ENCODE measurements at regions of chr1 and their contacts with region 1.

Region 1: DNA sequence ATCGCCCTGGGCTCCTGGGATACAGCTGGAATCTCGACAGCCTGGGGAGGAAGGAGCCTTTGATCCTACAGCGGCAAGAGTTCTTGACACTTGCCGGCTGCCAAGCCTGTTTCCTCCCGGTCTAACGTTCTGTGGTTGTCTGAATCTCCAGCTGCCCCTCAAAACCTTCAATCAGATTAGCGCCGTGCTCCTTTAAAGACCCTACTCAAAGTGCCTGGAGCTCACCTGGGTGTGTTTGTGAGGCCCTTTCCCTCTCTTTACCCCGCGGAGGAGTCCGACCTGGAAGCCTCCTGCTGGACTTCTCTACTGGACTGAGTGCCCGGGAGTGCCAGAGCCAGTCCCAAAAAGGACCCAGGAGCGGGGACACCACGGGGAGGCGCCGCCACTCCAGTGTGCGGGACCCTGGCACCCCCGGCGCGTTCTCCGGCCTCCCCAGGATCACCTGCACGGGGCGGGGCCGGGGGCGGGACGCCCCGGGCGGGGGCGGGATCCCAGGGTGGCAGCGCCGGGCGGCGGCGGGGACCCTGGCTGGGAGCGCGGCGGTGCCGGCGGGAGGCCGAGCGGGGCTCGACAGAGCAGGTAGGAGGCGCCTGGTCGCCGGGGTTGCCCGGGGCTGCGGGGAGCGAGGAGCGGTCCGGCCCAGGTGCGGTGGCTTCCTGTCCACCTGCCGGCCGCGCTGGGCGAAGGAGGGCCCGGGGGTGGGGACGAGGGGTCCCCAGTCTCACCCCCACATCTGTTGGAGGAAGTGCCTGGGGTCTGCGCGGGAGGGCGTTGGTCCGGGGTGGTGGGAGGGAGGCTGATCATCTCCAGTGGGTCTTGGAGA is at the start of gene NCMAP:
- DNase-seq: peak; percentile 48
- ATAC-seq: peak; percentile 66
- H3K4me3 ChIP-seq: peak within 1 kb of the TSS in 4 of 5 experiments; percentile 25 to 68 (median 49)
- H3K4me3 Mint-ChIP-seq: peak within 1 kb of the TSS; percentile 89
- H3K27ac ChIP-seq: no peak within 1 kb of the TSS
- H3K27ac Mint-ChIP-seq: peak within 1 kb of the TSS; percentile 65
- H3K4me1 ChIP-seq: peaks cover 11 to 18% of the 10 kb centered on the region in 2 donors
- H3K4me1 Mint-ChIP-seq: peaks cover 19% of the 10 kb centered on the region
- H3K27me3 ChIP-seq: peaks cover 0 to 34% (median 9%) of the 10 kb centered on the region in 4 experiments
- H3K27me3 Mint-ChIP-seq: peaks cover 21% of the 10 kb centered on the region
- CTCF ChIP-seq: no peak
- total RNA-seq, gene NCMAP: not detected in 2 replicates

Region 2: DNA sequence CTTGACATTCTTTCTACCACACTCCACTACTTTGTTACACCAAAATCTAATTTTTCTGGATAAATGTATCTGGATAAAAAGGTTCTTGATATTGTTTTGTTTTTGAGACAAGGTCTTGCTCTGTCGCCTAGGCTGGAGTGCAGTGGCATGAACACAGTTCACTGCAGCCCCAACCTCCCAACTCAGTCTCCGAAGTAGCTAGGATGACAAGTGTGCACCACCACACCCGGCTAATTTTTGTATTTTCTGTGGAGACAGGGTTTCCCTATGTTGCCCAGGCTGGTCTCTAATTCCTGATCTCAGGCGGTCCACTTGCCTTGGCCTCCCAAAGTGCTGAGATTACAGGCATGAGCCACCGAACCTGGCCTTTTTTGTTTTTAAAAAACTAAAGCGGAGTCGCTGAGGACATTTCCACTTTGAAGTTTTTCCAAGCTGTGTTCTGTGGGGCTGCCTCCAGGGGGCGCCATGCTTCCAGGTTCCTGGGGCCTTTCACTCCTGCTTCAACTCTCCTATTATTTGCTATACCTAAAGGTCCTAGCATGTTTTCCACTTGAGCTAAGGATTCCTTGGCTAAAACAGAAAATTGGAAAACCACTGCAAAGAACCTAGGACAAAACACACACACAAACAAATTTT is 14.0 kb before region 1 on chr1:
- CTCF ChIA-PET with region 1: interaction called, 4 read pairs
- POLR2A ChIA-PET with region 1: no interaction called
- intact Hi-C with region 1: loop called (anchors 2 kb)
- DNase-seq: no peak
- ATAC-seq: no peak
- H3K4me3 ChIP-seq: no peak overlapping the region
- H3K4me3 Mint-ChIP-seq: no peak overlapping the region
- H3K27ac ChIP-seq: no peak overlapping the region
- H3K27ac Mint-ChIP-seq: peak overlapping the region; percentile 56
- H3K4me1 ChIP-seq: peaks cover 32 to 35% of the 10 kb centered on the region in 2 donors
- H3K4me1 Mint-ChIP-seq: peaks cover 42% of the 10 kb centered on the region
- H3K27me3 ChIP-seq: no peaks in the 10 kb centered on the region
- H3K27me3 Mint-ChIP-seq: no peaks in the 10 kb centered on the region
- CTCF ChIP-seq: peak; percentile 26